Activated T-helper 1 cell treated with anti-CD3 and anti-CD28 coated beads, Interleukin-12 subunit alpha, Interleukin-12 subunit beta, Interleukin-2, Interleukin-4 antibody, amounts not matched to agents 30 ng/mL and 10 ng/mL and 1 ng/mL, durations not matched to agents 14 hours and 24 hours and 36 hours (primary cell): ENCODE measurements at regions of chr7 and their contacts with region 1.

Region 1: DNA sequence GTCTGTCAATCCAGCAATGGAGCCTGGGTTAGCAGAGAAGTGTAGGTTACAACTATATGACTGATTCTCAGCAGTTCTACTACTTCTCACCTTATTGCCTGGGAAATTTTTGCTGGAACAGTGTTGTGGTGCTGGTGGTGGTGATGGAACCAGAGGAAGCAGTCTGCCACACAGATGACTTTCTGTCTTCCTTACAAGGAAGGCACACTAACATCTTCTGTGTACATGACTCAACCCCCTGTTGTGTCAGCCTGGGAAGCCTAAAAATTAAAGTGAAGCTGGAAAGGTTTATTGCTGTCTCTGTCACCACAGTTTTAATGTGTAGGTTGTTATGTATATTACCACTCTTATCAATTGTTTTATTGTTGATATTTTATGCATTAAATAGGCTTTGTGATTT is 40.3 kb downstream of the ANKRD7 start:
- DNase-seq: no peak
- H3K4me3 Mint-ChIP-seq: no peak overlapping the region
- H3K27ac Mint-ChIP-seq: no peak overlapping the region
- H3K4me1 Mint-ChIP-seq: no peaks in the 10 kb centered on the region
- H3K27me3 Mint-ChIP-seq: peaks cover 13% of the 10 kb centered on the region

Region 2: GRCh38 chr7:118214051-118214832 is 50.6 kb before region 1 on chr7:
- intact Hi-C with region 1: no loop called
- DNase-seq: peak; percentile 26
- H3K4me3 Mint-ChIP-seq: peak overlapping the region; percentile 71
- H3K27ac Mint-ChIP-seq: no peak overlapping the region
- H3K4me1 Mint-ChIP-seq: peaks cover 13% of the 10 kb centered on the region
- H3K27me3 Mint-ChIP-seq: peaks cover 21% of the 10 kb centered on the region

Region 3: GRCh38 chr7:118502235-118502634 is 237.4 kb after region 1 on chr7:
- intact Hi-C with region 1: no loop called
- DNase-seq: no peak
- H3K4me3 Mint-ChIP-seq: no peak overlapping the region
- H3K27ac Mint-ChIP-seq: no peak overlapping the region
- H3K4me1 Mint-ChIP-seq: no peaks in the 10 kb centered on the region
- H3K27me3 Mint-ChIP-seq: no peaks in the 10 kb centered on the region

Region 4: GRCh38 chr7:118590107-118590506 is 325.3 kb after region 1 on chr7:
- intact Hi-C with region 1: loop called (anchors 5 kb)
- DNase-seq: no peak
- H3K4me3 Mint-ChIP-seq: no peak overlapping the region
- H3K27ac Mint-ChIP-seq: no peak overlapping the region
- H3K4me1 Mint-ChIP-seq: no peaks in the 10 kb centered on the region
- H3K27me3 Mint-ChIP-seq: no peaks in the 10 kb centered on the region